ENCODE measurements at regions of chr22 and their contacts with region 1.

Region 1: DNA sequence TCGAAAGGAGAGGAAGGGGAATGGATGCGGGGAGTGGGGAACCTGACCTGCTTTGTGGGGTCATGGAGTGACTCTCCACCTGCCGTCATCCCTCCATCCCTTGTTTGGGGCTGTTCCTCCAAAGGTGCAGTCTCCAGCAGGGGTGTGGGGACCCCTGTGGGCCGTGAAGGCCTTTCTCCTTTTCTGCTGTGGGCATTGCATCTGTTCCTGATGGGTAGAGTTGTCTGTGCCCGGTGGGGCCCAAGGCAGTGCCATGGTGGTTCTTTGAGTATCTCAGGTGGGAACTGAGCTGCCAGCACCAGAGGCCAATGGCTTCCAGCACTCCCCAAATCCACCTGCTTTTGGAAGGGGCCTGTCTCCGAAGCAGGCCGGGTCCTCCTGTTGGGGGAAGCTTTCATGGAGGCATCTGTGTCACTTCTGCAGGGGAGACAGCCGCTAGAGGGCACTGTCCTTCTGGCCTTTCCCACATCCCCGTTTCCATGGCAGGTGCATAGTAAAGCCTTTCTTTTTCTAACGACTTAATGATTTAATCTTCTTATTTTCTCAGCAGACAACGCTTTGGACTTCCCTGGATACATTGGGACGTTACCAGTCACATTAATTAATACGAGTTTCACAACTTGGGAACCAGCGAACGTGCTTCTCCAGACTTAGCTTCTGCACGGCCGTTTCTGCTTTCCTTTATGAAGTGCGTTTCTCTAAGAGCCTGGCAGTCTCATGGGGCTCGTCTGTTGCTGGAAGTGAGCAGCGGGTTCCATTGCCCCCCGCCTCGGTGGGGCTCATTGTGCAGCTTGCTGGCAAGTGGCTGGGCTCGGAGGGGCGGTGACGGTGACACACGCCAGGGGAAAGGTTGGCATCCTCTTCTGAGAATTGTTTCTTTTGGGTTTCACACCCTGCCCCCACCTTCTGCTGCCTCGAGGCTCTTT is 57.1 kb downstream of the PARVB start:
- DNase-seq: peak; percentile 69 to 86
- ATAC-seq: no peak
- H3K4me3 ChIP-seq: no peak overlapping the region
- H3K27ac ChIP-seq: no peak overlapping the region
- H3K4me1 ChIP-seq: peaks cover 13% of the 10 kb centered on the region
- H3K27me3 ChIP-seq: no peaks in the 10 kb centered on the region
- CTCF ChIP-seq: peak; percentile 84

Region 2: GRCh38 chr22:43993027-43993760 is 88.0 kb before region 1 on chr22:
- intact Hi-C with region 1: loop called in 1 of 2 experiments (anchors 1 kb)
- DNase-seq: peak; percentile 46 to 76
- ATAC-seq: peak; percentile 70 to 85 (median 81)
- H3K4me3 ChIP-seq: no peak overlapping the region
- H3K27ac ChIP-seq: peak overlapping the region; percentile 32
- H3K4me1 ChIP-seq: peaks cover 22% of the 10 kb centered on the region
- H3K27me3 ChIP-seq: no peaks in the 10 kb centered on the region
- CTCF ChIP-seq: peak; percentile 98

Region 3: DNA sequence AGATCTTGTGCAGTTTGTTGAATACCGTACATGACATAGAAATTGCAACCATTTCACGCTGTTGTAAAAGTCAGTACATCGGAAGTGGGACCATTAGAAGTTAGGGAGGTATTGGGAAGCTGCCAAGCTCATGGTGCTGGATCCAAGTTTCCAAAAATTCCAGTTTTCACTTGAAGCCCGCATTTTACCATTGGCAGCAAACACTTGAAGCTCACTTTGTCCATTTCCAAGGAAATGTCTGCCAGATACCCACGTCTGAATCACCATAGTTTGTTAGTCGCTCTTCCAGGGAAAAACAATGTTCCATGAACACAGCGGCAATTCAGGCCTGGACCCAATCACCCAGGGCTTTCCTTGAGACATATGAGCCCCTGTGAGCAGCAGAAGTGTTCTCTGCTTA is 79.7 kb before region 1 on chr22:
- intact Hi-C with region 1: loop called in 1 of 2 experiments (anchors 2 kb)
- DNase-seq: no peak
- ATAC-seq: no peak
- H3K4me3 ChIP-seq: no peak overlapping the region
- H3K27ac ChIP-seq: no peak overlapping the region
- H3K4me1 ChIP-seq: peaks cover 9% of the 10 kb centered on the region
- H3K27me3 ChIP-seq: no peaks in the 10 kb centered on the region
- CTCF ChIP-seq: no peak

Region 4: GRCh38 chr22:44023404-44024287 is 57.6 kb before region 1 on chr22:
- intact Hi-C with region 1: loop called (anchors 5 kb)
- DNase-seq: peak; percentile 69 to 80
- ATAC-seq: peak; percentile 26 to 57 (median 52)
- H3K4me3 ChIP-seq: peak overlapping the region; percentile 84
- H3K27ac ChIP-seq: peak overlapping the region; percentile 96
- H3K4me1 ChIP-seq: peaks cover 67% of the 10 kb centered on the region
- H3K27me3 ChIP-seq: no peaks in the 10 kb centered on the region
- CTCF ChIP-seq: no peak

Region 5: GRCh38 chr22:44063462-44064371 is 17.5 kb before region 1 on chr22:
- intact Hi-C with region 1: loop called in 1 of 2 experiments (anchors 1 kb)
- DNase-seq: peak; percentile 47 to 73
- ATAC-seq: peak; percentile 76 to 82 (median 80)
- H3K4me3 ChIP-seq: no peak overlapping the region
- H3K27ac ChIP-seq: peak overlapping the region; percentile 71
- H3K4me1 ChIP-seq: peaks cover 21% of the 10 kb centered on the region
- H3K27me3 ChIP-seq: no peaks in the 10 kb centered on the region
- CTCF ChIP-seq: no peak

Region 6: GRCh38 chr22:44625981-44626687 is 544.9 kb after region 1 on chr22:
- intact Hi-C with region 1: loop called in 1 of 2 experiments (anchors 10 kb)
- DNase-seq: peak; percentile 68 to 80
- ATAC-seq: peak; percentile 81 to 94 (median 87)
- H3K4me3 ChIP-seq: no peak overlapping the region
- H3K27ac ChIP-seq: no peak overlapping the region
- H3K4me1 ChIP-seq: no peaks in the 10 kb centered on the region
- H3K27me3 ChIP-seq: peaks cover 0 to 30% (median 7%) of the 10 kb centered on the region in 3 donors
- CTCF ChIP-seq: peak; percentile 97